CD8-positive, alpha-beta T cell (primary cell): ENCODE measurements at regions of chr1 and their contacts with region 1.

Region 1: GRCh38 chr1:160813215-160813614 is 17.2 kb downstream of the LY9 start:
- DNase-seq: no peak
- ATAC-seq: peak; percentile 77
- H3K4me3 ChIP-seq: no peak overlapping the region
- H3K4me3 Mint-ChIP-seq: no peak overlapping the region
- H3K27ac ChIP-seq: no peak overlapping the region
- H3K27ac Mint-ChIP-seq: peak overlapping the region; percentile 84
- H3K4me1 ChIP-seq: peaks cover 17% of the 10 kb centered on the region
- H3K4me1 Mint-ChIP-seq: peaks cover 52% of the 10 kb centered on the region
- H3K27me3 ChIP-seq: no peaks in the 10 kb centered on the region
- H3K27me3 Mint-ChIP-seq: no peaks in the 10 kb centered on the region
- CTCF ChIP-seq: no peak

Region 2: DNA sequence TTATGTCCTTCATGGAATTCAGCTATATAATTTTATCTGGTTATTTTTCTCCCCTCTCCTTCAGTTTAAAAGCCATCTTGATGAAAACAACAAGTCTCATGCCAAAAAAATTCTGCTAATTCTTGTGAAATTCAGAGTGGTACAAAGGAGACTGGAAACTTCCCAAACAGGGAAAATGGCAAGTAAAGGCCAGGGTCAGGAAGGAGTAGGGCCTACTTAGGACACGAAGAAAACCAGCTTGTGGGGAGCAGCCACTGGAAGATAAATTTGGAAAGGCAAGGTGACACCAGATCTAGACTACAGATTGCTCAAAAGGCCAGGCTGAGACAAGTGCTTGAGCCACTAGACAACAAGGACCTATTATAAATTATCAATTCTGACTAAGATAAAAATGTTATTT is 219.2 kb after region 1 on chr1:
- CTCF ChIA-PET with region 1: no interaction called
- POLR2A ChIA-PET with region 1: no interaction called
- intact Hi-C with region 1: loop called in 1 of 2 experiments (anchors 1 kb)
- DNase-seq: no peak
- ATAC-seq: no peak
- H3K4me3 ChIP-seq: no peak overlapping the region
- H3K4me3 Mint-ChIP-seq: no peak overlapping the region
- H3K27ac ChIP-seq: no peak overlapping the region
- H3K27ac Mint-ChIP-seq: peak overlapping the region; percentile 8
- H3K4me1 ChIP-seq: peaks cover 5% of the 10 kb centered on the region
- H3K4me1 Mint-ChIP-seq: peaks cover 18% of the 10 kb centered on the region
- H3K27me3 ChIP-seq: no peaks in the 10 kb centered on the region
- H3K27me3 Mint-ChIP-seq: no peaks in the 10 kb centered on the region
- CTCF ChIP-seq: no peak